A673 (cell line): ENCODE measurements at regions of chr4 and their contacts with region 1.

Region 1: GRCh38 chr4:159778298-159778697 is 675.4 kb downstream of the RAPGEF2 start:
- DNase-seq: no peak
- H3K4me3 ChIP-seq: peak overlapping the region; percentile 55
- H3K27ac ChIP-seq: peak overlapping the region; percentile 94
- H3K4me1 ChIP-seq: peaks cover 48% of the 10 kb centered on the region
- H3K27me3 ChIP-seq: no peaks in the 10 kb centered on the region
- CTCF ChIP-seq: no peak

Region 2: DNA sequence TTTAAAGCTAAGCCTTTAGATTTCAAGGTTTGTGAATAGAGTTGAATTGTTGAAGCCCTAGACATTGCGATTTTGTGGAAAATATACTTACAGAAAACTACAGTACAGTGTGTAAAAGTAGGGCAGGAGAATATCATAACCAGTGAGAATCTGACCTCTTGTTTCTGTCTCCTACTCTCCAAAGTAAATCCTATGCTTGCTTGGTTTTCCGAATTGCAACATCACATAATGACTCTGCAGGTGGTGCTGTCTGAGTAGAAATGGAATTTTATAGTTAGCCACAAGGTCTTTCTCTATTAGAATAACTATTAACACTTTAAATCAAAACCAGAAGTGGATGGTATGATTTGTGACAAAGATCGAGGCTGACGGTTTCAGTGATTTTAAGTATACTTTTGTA is 169.9 kb before region 1 on chr4:
- CTCF ChIA-PET with region 1: no interaction called
- POLR2A ChIA-PET with region 1: no interaction called
- intact Hi-C with region 1: loop called (anchors 2 kb)
- DNase-seq: peak; percentile 87
- H3K4me3 ChIP-seq: no peak overlapping the region
- H3K27ac ChIP-seq: peak overlapping the region; percentile 1
- H3K4me1 ChIP-seq: peaks cover 14% of the 10 kb centered on the region
- H3K27me3 ChIP-seq: no peaks in the 10 kb centered on the region
- CTCF ChIP-seq: peak; percentile 56

Region 3: DNA sequence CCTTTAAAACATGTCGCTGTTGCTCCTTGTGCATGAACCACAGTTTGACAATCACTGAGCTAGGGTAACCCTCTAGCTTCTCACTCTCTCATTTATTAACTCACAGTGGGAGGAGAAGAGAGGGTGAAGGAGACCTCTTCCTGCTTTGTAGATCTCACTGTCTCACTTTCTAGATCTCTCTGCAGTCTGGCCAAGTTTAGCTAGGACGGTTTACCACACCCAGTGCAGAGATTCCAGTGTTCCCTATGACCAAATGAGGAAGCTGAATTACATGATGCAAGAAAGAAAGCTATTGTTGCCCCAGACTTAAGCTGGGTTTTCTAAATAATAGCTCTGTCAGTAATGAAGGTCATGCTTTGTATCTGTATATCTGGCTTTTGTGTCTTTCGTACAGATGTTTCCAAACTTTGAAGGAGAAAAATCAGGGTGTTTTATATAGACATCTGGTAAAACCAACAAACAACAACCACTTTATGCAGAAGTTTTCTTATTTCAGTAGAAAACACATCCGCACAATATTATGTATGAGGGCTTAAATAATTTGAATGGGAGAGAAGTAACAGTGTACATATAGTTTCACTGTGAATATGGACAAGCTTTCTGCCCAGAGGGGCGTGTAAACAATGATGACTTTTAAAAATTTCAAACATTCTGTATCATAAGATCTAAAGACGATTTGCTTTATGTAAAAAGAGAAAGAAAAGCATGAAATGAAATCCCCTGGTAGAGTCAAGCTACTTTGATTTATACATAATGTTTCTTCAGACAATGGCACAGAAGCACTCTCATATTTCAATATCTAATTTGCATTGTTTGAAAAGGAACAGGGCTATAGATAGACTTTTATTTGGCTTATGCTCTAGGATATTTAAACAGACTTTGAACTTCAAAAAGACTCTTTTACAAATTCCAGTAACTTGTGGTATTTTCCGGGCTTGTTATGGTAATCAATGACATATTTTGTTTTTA is 1803.2 kb after region 1 on chr4:
- CTCF ChIA-PET with region 1: interaction called, 4 read pairs
- POLR2A ChIA-PET with region 1: no interaction called
- intact Hi-C with region 1: loop called (anchors 5 kb)
- DNase-seq: peak; percentile 45
- H3K4me3 ChIP-seq: no peak overlapping the region
- H3K27ac ChIP-seq: peak overlapping the region; percentile 79
- H3K4me1 ChIP-seq: peaks cover 47% of the 10 kb centered on the region
- H3K27me3 ChIP-seq: no peaks in the 10 kb centered on the region
- CTCF ChIP-seq: no peak